ENCODE measurements at regions of chr13 and their contacts with region 1.

Region 1: GRCh38 chr13:35630551-35631275 is 154.2 kb upstream of the MAB21L1 start:
- DNase-seq: peak; percentile 66
- H3K4me3 Mint-ChIP-seq: no peak overlapping the region
- H3K27ac Mint-ChIP-seq: no peak overlapping the region
- H3K4me1 Mint-ChIP-seq: no peaks in the 10 kb centered on the region
- H3K27me3 Mint-ChIP-seq: no peaks in the 10 kb centered on the region
- CTCF ChIP-seq: peak; percentile 65

Region 2: DNA sequence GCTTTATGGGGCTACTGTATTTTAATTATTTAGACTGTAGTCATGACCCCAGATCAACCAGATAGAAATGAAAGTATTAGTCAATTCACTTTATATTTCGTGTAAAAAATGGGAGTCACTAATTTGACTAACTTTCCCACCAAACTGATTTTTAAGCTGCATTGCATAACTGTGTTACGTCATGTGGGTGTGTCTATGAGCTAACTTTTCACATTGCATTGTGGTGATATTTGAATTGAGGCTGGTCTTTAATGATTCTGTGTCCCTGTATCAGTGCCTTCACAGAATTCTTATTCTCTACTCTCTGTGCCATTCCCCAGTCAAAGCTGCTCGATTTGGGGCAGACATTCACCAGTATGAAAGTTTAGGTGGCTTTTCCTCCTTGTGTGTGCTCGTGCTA is 18.4 kb after region 1 on chr13:
- CTCF ChIA-PET with region 1: interaction called, 19 read pairs
- POLR2A ChIA-PET with region 1: no interaction called
- intact Hi-C with region 1: no loop called
- DNase-seq: peak; percentile 47
- H3K4me3 Mint-ChIP-seq: no peak overlapping the region
- H3K27ac Mint-ChIP-seq: no peak overlapping the region
- H3K4me1 Mint-ChIP-seq: peaks cover 7% of the 10 kb centered on the region
- H3K27me3 Mint-ChIP-seq: no peaks in the 10 kb centered on the region
- CTCF ChIP-seq: no peak

Measured in MCF 10A (cell line).